Sigmoid colon (tissue), 7 donors: ENCODE measurements at regions of chr4 and their contacts with region 1.

Region 1: GRCh38 chr4:88591787-88592599 is at the start of gene HERC3:
- DNase-seq: peak; percentile 95
- H3K4me3 ChIP-seq: peak within 1 kb of the TSS; percentile 93 to 100 (median 98)
- H3K27ac ChIP-seq: peak within 1 kb of the TSS; percentile 97 to 99 (median 98)
- H3K4me1 ChIP-seq: peaks cover 0 to 28% (median 16%) of the 10 kb centered on the region in 4 donors
- H3K27me3 ChIP-seq: no peaks in the 10 kb centered on the region
- CTCF ChIP-seq: peak in 1 of 4 experiments; percentile 14
- EP300 ChIP-seq: no peak
- POLR2A ChIP-seq: peak; percentile 23 to 24
- total RNA-seq, gene HERC3: 34.6 to 44.9 (median 36.3) TPM

Region 2: GRCh38 chr4:88007304-88008121 is 584.5 kb before region 1 on chr4 and contains the start of gene PKD2:
- intact Hi-C with region 1: loop called (anchors 5 kb)
- DNase-seq: peak; percentile 94
- H3K4me3 ChIP-seq: peak within 1 kb of the TSS; percentile 80 to 97 (median 92)
- H3K27ac ChIP-seq: peak within 1 kb of the TSS; percentile 90 to 97 (median 94)
- H3K4me1 ChIP-seq: peaks cover 0 to 65% (median 57%) of the 10 kb centered on the region in 4 donors
- H3K27me3 ChIP-seq: no peaks in the 10 kb centered on the region
- CTCF ChIP-seq: no peak
- EP300 ChIP-seq: no peak
- POLR2A ChIP-seq: no peak
- total RNA-seq, gene PKD2: 67.6 to 123 (median 101) TPM

Region 3: GRCh38 chr4:88646528-88647280 is 54.7 kb after region 1 on chr4:
- intact Hi-C with region 1: no loop called
- DNase-seq: no peak
- H3K4me3 ChIP-seq: no peak overlapping the region
- H3K27ac ChIP-seq: no peak overlapping the region
- H3K4me1 ChIP-seq: peaks cover 0 to 13% (median 10%) of the 10 kb centered on the region in 4 donors
- H3K27me3 ChIP-seq: no peaks in the 10 kb centered on the region
- CTCF ChIP-seq: no peak
- EP300 ChIP-seq: no peak
- POLR2A ChIP-seq: no peak

Region 4: DNA sequence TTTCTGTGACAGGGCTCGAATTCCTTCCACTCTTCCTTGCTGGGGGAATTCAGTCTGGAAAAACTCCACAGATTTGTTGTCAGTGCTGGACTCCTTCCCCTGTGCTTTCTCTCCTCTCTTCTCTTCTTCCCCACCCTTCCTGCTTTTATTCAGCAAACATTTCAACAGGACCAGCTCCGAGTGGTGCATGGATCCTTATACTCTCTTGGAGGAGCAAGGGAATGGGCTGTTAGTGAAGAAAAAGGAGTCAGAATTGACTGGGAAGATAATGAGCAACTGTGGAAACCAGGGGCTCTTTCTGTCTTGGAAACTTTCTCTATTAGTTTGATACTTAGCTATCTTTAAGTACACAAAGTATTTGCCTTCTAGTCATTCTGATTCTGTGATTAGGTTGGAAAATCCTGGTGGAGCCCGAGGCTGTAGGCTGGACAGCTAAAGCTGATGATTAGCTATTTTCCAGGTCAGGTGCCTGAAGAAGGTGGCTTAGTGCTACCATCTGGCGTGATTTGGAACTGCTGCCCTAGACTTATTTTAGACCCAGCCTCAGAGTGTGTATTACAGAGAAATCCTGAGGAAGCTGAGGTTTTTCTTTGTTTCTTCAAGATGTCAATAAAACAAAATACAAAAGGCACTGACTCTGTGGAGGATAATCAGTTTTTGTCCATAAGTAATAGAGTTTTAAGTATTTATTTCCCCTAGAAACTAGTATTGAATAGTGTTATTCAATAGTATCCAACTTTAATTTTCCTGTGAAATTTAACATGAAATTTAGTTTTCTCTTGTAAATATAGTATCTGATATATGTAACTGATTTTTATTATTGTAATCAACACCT is 67.3 kb after region 1 on chr4:
- intact Hi-C with region 1: loop called (anchors 5 kb)
- DNase-seq: peak; percentile 70
- H3K4me3 ChIP-seq: no peak overlapping the region
- H3K27ac ChIP-seq: peak overlapping the region; percentile 38 to 61 (median 58)
- H3K4me1 ChIP-seq: peaks cover 0 to 25% (median 17%) of the 10 kb centered on the region in 4 donors
- H3K27me3 ChIP-seq: no peaks in the 10 kb centered on the region
- CTCF ChIP-seq: peak; percentile 50 to 83 (median 76)
- EP300 ChIP-seq: no peak
- POLR2A ChIP-seq: no peak

Region 5: GRCh38 chr4:88697588-88698329 is 105.8 kb after region 1 on chr4 and contains the start of gene NAP1L5:
- intact Hi-C with region 1: loop called (anchors 5 kb)
- DNase-seq: peak; percentile 91
- H3K4me3 ChIP-seq: peak within 1 kb of the TSS; percentile 39 to 64 (median 63)
- H3K27ac ChIP-seq: peak within 1 kb of the TSS; percentile 71 to 84 (median 81)
- H3K4me1 ChIP-seq: no peaks in the 10 kb centered on the region
- H3K27me3 ChIP-seq: no peaks in the 10 kb centered on the region
- CTCF ChIP-seq: no peak
- EP300 ChIP-seq: peak in 2 of 4 donors; percentile 12 to 52
- POLR2A ChIP-seq: peak; percentile 44 to 63
- total RNA-seq, gene NAP1L5: 7.3 to 13.6 (median 9.4) TPM